ENCODE measurements at regions of chr7 and their contacts with region 1.

Region 1: GRCh38 chr7:149317986-149318672 is 56.1 kb downstream of the ZNF783 start:
- DNase-seq: peak; percentile 78
- ATAC-seq: peak; percentile 93
- H3K4me3 Mint-ChIP-seq: no peak overlapping the region
- H3K27ac Mint-ChIP-seq: no peak overlapping the region
- H3K4me1 Mint-ChIP-seq: peaks cover 36% of the 10 kb centered on the region
- H3K27me3 Mint-ChIP-seq: no peaks in the 10 kb centered on the region; the same call in 1 of the 2 replicates
- CTCF ChIP-seq: peak; percentile 29

Region 2: DNA sequence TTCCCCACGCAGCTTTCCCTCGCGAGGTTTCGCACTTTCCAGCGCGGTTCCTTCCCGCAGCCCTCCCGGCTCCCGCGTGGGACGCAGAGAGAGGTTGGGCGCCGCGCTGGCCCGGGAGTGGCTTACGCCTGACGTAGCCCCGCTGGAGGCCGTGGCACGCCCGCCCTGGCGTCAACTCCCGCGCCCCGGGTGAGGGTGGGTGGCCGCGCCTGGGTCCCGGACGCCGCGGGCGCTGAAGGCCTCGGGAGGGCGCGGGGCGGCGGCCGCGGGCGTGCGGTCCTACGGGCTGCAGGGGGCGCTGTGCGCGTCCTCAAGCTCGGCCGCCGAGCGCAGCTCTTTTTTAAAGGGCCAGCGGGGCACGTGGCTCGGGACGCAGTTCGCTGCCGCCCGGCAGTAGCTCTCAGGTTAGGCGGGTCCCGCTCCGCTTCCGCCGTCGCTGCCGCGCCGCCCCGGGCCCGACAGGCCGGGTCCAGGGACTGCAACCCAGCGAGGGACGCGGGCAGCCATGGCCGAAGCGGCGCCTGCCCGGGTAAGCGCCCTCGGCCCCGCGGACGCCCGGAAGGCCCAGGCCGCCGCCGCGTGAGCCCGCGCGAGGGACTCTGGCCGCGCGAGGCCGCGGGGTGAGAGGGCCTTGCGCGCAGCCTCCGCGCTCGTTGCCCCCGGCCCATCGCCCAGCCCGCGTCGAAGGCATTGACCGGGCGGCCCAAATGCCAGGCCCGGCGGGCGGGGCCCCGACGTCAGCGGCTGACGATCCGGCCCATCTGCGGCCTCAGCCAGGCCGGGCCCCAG is 56.1 kb before region 1 on chr7 and contains the start of gene ZNF783:
- CTCF ChIA-PET with region 1: interaction called, 18 read pairs
- POLR2A ChIA-PET with region 1: no interaction called
- DNase-seq: peak; percentile 84
- ATAC-seq: peak; percentile 80
- H3K4me3 Mint-ChIP-seq: peak within 1 kb of the TSS; percentile 79
- H3K27ac Mint-ChIP-seq: no peak within 1 kb of the TSS
- H3K4me1 Mint-ChIP-seq: no peaks in the 10 kb centered on the region
- H3K27me3 Mint-ChIP-seq: peaks cover 23% of the 10 kb centered on the region
- CTCF ChIP-seq: peak; percentile 79
- total RNA-seq, gene ZNF783: 9.9 to 12.1 TPM (median 12.0 TPM) in 3 replicates

Region 3: DNA sequence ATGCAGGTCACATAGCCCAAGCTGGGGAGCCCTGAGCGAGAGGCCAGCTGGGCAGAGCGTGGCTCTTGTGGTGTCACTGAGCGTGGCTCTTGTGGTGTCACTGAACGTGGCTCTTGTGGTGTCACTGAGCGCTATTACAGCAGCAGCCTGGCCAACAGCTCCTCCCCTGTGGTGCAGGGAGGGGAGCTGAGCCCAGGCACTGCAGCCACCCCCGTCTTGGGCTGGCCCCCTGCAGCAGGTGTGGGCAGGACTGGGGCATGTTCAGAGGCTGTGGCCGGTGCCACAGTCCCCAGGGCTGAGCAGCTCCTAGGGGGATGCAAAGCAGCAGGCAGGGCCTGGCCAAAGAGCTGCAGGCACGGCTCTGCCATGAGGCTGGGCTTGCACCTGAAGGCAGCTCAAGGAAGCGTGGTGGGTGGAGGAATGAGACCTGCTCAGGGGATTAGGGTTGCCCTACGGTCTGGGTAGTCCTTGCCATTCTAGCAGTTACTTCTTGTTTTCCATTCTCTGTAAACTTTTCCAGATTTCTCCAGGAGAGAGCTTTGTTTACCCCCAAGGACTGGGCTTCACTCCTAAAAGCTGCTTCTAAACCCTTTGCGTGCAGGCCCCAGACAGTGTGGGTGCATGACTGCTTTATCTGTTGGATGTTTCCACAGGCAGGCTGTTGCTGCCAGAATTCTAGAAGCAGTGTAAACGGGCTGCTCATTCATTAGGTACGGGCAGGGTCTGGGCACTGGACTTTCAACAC is 26.9 kb before region 1 on chr7:
- CTCF ChIA-PET with region 1: interaction called, 35 read pairs
- POLR2A ChIA-PET with region 1: no interaction called
- DNase-seq: no peak
- ATAC-seq: no peak
- H3K4me3 Mint-ChIP-seq: no peak overlapping the region
- H3K27ac Mint-ChIP-seq: peak overlapping the region; percentile 41; the same call in 1 of the 2 replicates
- H3K4me1 Mint-ChIP-seq: peaks cover under 1% of the 10 kb centered on the region
- H3K27me3 Mint-ChIP-seq: peaks cover 4% of the 10 kb centered on the region; the same call in 1 of the 2 replicates
- CTCF ChIP-seq: no peak

Region 4: GRCh38 chr7:149362696-149363095 is 44.6 kb after region 1 on chr7:
- CTCF ChIA-PET with region 1: interaction called, 12 read pairs
- POLR2A ChIA-PET with region 1: no interaction called
- DNase-seq: no peak
- ATAC-seq: no peak
- H3K4me3 Mint-ChIP-seq: no peak overlapping the region
- H3K27ac Mint-ChIP-seq: no peak overlapping the region
- H3K4me1 Mint-ChIP-seq: no peaks in the 10 kb centered on the region
- H3K27me3 Mint-ChIP-seq: peaks cover 32% of the 10 kb centered on the region
- CTCF ChIP-seq: no peak

Region 5: DNA sequence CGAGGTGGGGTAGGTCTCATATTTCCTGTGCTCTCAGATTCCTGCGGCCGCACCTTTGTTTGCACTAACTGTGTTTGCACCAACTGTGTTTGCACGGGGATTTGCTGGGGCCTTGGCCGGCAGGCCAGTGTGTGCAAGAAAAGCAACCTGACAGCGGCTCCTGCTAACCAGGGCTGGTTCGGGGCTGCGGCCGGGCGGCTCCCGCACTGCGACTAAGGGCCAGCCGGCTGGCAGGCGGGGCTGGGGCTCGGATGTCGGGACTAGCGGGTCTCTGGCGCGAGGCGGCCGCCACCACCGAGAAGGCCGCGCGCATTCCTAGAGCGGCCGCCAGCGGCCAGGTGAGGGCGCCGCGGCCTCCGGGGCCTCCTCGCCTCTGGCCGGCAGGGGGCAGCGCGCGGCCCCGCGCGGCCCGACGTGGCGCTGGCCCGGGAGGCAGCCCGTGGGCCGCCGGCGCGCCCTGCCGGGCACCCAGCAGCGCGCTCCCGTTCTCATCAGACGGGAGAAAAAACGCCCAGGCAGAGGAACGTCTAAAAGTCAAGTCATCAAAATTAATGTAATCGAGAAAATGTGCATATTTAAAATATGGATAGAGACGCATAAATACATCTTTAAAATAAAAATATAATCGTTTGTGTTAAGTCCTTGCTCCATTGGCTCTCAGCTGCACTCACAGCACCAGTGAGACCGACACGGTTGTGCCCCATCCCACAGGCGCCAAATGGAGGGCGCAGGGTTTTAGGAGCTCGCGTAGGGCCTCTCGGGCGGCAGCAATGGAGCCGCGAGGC is 104.2 kb after region 1 on chr7:
- CTCF ChIA-PET with region 1: interaction called, 10 read pairs
- POLR2A ChIA-PET with region 1: no interaction called
- DNase-seq: peak; percentile 86
- ATAC-seq: peak; percentile 96
- H3K4me3 Mint-ChIP-seq: peak overlapping the region; percentile 79
- H3K27ac Mint-ChIP-seq: peak overlapping the region; percentile 89
- H3K4me1 Mint-ChIP-seq: peaks cover 11% of the 10 kb centered on the region
- H3K27me3 Mint-ChIP-seq: peaks cover 14% of the 10 kb centered on the region
- CTCF ChIP-seq: peak; percentile 44; the same call in 1 of the 2 replicates

Region 6: GRCh38 chr7:149635561-149636329 is 317.6 kb after region 1 on chr7:
- CTCF ChIA-PET with region 1: no interaction called
- POLR2A ChIA-PET with region 1: no interaction called
- DNase-seq: peak; percentile 76
- ATAC-seq: peak; percentile 97
- H3K4me3 Mint-ChIP-seq: peak overlapping the region; percentile 15; the same call in 1 of the 2 replicates
- H3K27ac Mint-ChIP-seq: 0 out of 2 replicates have a peak overlapping the region, but pooled peaks have one; percentile 50
- H3K4me1 Mint-ChIP-seq: peaks cover 4% of the 10 kb centered on the region; the same call in 1 of the 2 replicates
- H3K27me3 Mint-ChIP-seq: peaks cover 18% of the 10 kb centered on the region
- CTCF ChIP-seq: no peak